ENCODE measurements at regions of chr13 and their contacts with region 1.

Region 1: DNA sequence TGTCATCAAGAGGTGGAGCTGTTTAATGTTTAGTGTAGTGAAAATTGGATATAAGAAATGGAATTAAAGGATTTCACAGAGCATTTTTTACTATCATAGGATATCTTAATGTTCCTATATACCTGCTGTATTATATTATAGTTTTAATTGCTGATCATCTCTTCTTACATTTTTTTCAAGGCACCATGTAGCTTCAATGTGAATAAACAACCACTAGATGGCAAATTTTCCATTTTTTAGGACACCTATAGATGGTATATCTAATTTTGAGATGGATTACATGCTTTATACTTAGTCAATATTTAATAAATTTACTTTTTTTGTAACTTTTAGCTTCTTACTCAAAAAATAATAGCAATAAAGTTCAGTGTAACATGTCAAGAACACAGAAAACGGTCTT is 9.0 kb upstream of the ATXN8OS start:
- DNase-seq: peak; percentile 8
- H3K4me3 Mint-ChIP-seq: no peak overlapping the region
- H3K27ac Mint-ChIP-seq: no peak overlapping the region
- H3K4me1 Mint-ChIP-seq: no peaks in the 10 kb centered on the region
- H3K27me3 Mint-ChIP-seq: peaks cover 48% of the 10 kb centered on the region
- CTCF ChIP-seq: peak; percentile 47

Region 2: GRCh38 chr13:70310396-70311119 is 211.9 kb after region 1 on chr13:
- CTCF ChIA-PET with region 1: interaction called, 3 read pairs
- POLR2A ChIA-PET with region 1: no interaction called
- intact Hi-C with region 1: loop called (anchors 1 kb)
- DNase-seq: peak; percentile 62
- H3K4me3 Mint-ChIP-seq: no peak overlapping the region
- H3K27ac Mint-ChIP-seq: no peak overlapping the region
- H3K4me1 Mint-ChIP-seq: no peaks in the 10 kb centered on the region
- H3K27me3 Mint-ChIP-seq: peaks cover 43% of the 10 kb centered on the region
- CTCF ChIP-seq: peak; percentile 41

Measured in MCF 10A (cell line).